ENCODE measurements at regions of chr1 and their contacts with region 1.

Region 1: DNA sequence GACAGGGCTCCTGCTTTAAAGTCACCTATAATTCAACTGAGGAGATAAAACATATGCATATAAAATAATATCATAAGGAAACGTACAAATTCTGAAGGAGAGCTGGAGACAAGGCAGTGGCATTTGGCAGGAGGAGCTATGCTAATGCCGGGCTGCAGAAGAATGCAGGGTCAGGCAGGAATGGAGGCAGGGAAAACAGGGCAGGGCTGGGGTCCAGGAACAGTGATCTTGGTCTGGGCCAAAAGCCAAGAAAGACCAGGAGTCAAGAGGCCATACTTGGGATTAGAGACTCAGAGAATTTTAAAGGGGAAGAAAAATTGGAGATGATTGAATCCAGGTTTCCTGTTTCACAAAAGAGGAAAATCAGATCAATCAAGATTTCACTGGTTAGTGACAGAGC is 20.0 kb upstream of the BRDT start:
- DNase-seq: no peak
- H3K4me3 ChIP-seq: no peak overlapping the region
- H3K27ac ChIP-seq: no peak overlapping the region
- H3K27me3 ChIP-seq: no peaks in the 10 kb centered on the region
- CTCF ChIP-seq: no peak

Region 2: DNA sequence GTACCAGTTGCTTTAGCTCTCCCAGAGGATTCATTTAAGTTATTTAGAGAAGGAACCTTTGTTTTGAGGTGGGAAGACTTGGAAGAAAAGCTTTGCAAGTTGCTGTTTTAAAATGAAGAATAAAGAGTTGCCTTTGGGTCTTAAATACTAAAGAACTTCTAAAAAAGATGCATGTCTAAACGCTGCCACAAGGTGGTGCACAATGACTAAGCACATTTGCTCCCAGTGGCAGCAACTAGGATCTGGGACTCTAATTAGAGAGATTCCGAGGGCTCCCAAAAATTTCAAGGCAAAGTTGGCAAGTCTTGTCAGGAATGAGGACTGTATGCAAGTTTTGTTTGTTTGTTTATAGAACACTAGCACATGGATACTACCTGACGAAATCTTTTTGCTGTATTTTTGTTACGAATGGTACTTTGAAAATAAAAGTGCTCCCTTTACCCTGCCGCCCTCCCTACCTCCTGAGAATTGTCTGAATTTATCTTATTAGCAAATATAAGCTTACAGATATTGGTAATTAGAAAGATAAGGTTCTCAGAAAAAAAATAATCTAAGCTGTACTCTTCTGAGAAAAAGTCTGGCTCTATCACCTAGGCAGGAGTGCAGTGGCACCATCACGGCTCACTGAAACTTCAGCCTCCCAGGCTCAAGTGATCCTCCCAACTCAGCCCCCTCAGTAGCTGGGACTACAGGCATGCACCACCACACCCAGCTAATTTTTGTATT is 646.4 kb before region 1 on chr1:
- intact Hi-C with region 1: loop called (anchors 5 kb)
- DNase-seq: peak in 8 of 10 donors; percentile 18 to 70 (median 46)
- H3K4me3 ChIP-seq: peak overlapping the region in 40 of 59 donors; percentile 1 to 56 (median 36)
- H3K27ac ChIP-seq: no peak overlapping the region
- H3K27me3 ChIP-seq: no peaks in the 10 kb centered on the region
- CTCF ChIP-seq: peak; percentile 56 to 95 (median 87)

Region 3: GRCh38 chr1:91511386-91511785 is 417.9 kb before region 1 on chr1:
- intact Hi-C with region 1: loop called (anchors 5 kb)
- DNase-seq: no peak
- H3K4me3 ChIP-seq: no peak overlapping the region
- H3K27ac ChIP-seq: no peak overlapping the region
- H3K27me3 ChIP-seq: no peaks in the 10 kb centered on the region
- CTCF ChIP-seq: peak; percentile 43 to 85 (median 66)

Region 4: DNA sequence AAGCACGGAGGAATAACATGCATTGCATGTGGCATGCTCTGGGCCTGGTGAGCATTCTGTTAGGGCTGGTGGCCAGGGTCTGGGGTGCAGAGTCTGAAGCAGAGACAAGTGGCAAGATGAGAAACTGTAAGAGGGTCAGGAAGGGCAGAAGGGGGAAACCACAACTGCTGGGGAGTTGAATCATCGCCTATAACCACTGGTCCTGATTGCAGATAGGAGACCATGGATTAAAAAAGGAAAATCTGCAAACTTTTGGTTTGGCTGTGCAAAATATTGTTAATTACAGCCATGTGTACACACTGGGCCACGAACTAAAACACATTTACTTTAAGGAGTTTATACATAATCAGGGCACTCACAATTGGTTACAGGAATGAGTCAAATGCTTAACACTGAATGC is 119.9 kb before region 1 on chr1:
- intact Hi-C with region 1: no loop called
- DNase-seq: no peak
- H3K4me3 ChIP-seq: no peak overlapping the region
- H3K27ac ChIP-seq: no peak overlapping the region
- H3K27me3 ChIP-seq: peaks cover 0 to 3% (median 0%) of the 10 kb centered on the region in 45 donors
- CTCF ChIP-seq: no peak

Measured in dorsolateral prefrontal cortex (tissue), 120 donors.